Activated CD4-positive, alpha-beta T cell treated with anti-CD3 and anti-CD28 coated beads, Interleukin-2, amount 10 ng/mL, durations not matched to agents 24 days and 14 days (primary cell): ENCODE measurements at regions of chr3 and their contacts with region 1.

Region 1: DNA sequence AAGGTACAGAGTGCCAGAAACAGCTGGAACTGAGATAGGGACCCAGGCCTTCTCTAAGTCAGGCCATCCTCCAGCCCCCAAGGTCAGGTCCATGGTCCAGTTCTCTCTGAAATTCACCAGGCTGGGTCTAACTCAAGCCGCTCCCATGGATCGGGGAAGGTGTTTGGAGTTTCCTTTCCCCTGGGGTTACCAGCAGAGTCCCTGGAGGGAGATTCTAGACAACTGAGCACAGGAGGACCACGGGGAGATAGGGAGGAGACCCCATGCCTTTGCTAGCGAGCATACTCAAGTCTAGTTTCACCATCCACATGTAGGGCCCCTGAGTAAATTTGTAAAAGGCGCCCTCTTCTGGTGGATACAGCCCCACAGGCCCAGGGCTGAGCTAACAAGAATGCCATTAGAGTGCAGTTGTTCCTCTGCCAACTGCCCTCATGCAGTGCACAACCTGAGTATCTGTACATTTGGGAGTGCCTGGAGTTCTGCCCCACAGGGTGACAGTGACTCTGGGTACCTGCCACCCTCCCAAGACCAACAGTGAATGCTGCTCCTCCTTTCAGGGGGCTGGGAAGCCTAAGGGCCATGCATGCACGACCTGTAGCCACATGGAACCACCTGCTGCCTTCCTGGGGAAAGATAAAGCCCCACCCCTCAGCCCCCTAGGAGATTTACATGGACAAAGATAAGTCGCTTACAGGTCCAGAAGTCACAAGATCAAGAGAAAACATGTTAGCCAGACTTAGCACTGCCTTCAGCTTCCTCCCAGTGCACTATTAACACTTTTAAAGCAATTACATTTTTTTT is 89.0 kb downstream of the IQSEC1 start:
- DNase-seq: peak; percentile 87
- H3K4me3 Mint-ChIP-seq: no peak overlapping the region
- H3K27ac Mint-ChIP-seq: no peak overlapping the region
- H3K4me1 Mint-ChIP-seq: peaks cover 19% of the 10 kb centered on the region
- H3K27me3 Mint-ChIP-seq: no peaks in the 10 kb centered on the region

Region 2: DNA sequence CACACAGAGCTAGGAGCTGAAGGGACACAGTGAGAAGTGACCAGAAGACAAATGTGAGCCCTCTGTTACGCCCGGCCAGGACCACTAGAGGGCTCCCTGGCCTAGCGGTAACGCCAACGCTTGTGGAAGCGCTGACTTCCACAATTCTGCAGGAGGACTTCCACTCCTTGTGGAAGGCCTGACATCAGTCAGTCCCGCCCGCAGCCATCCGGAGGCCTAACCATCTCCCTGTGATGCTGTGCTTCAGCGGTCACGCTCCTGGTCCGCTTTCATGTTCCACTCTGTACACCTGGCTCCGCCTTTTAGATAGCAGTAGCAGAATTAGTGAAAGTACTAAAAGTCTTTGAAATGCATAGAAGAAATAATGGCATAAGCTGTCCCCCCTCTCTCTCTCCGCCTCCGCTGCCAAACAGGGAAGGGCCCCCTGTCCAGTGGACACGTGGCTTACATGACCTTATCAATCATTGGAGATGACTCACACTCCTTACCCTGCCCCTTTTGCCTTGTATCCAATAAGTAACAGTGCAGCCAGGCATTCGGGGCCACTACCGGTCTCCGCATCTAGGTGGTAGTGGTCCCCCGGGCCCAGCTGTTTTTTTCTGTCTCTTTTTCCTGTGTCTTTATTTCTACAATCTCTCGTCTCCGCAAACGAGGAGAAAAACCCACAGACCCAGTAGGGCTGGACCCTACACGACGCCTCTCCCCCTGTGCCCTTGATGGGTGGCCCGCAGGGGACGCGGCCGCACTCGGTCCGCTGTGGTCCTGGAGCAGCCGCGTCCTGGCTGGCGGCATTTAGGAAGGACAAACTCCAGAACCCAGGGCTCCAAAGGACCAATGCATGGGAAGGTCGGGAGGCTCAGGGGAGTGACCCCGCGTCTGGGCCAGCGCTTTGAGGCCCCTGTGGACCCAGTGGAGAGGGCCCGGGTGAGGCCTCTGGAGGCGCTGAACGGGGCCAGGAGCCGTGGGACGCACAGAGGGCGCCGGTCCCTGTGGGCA is 115.9 kb before region 1 on chr3:
- intact Hi-C with region 1: loop called (anchors 1 kb)
- DNase-seq: peak; percentile 88
- H3K4me3 Mint-ChIP-seq: peak overlapping the region; percentile 79
- H3K27ac Mint-ChIP-seq: peak overlapping the region; percentile 29
- H3K4me1 Mint-ChIP-seq: peaks cover 12% of the 10 kb centered on the region
- H3K27me3 Mint-ChIP-seq: peaks cover 31% of the 10 kb centered on the region

Region 3: DNA sequence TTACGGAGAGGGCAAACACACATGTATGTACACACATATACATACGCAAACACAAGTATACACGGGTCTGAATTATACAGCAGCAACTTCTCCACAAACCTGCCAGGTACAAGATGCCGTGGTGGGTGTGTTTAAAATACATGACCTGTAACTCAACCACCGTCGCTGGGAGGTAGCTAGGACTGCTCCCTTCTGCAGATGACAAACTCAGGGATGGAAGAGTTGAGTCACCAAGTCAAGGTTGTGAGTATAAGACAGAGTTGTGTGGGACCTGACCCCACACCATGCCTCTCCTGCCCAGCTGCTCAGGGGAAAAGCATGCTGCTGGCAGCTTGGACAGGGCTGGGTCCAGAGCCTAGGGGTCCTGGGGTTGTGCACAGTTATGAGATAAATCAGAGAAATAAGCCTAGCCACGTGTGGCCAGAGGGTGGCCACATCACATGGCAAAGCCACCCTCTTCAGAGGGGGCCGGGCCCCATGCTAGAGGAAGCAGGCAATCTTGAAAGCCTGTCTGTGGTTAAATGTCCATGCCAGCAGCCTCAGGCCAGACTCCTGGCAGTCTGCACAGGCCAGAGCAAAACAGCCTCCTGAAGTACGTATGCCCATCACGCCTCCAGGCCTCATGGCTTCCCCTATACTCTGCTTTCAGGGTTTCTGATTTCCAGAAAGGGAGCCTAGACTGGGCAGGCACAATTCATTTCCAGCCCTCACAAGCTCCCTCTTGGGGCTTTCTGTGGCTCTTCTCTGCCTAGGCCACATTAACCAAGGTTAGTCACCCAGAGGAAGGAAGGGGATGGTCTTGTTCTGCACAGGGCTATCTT is 35.1 kb before region 1 on chr3:
- intact Hi-C with region 1: loop called (anchors 5 kb)
- DNase-seq: peak; percentile 75
- H3K4me3 Mint-ChIP-seq: peak overlapping the region; percentile 40
- H3K27ac Mint-ChIP-seq: peak overlapping the region; percentile 89
- H3K4me1 Mint-ChIP-seq: peaks cover 30% of the 10 kb centered on the region
- H3K27me3 Mint-ChIP-seq: no peaks in the 10 kb centered on the region

Region 4: DNA sequence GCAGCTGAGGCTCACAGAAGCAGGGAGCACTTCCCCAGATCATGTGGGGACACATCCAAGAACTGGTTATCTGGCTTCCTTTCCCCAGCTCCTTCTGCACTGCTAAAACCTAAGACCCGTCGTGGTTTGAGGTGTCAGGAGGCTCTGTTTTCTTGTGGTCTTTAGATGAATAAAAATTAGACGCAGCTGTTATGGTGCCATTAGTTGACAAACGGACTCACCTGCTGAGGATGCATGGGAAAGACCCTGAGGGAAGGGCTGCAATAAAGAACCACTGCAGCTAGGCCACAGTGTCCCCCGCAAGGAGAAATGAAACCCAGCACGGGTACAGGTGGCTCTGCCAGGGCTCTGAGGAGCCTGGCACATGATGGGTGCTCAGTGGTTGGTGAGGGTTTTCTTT is 10.4 kb before region 1 on chr3:
- intact Hi-C with region 1: loop called (anchors 2 kb)
- DNase-seq: no peak
- H3K4me3 Mint-ChIP-seq: no peak overlapping the region
- H3K27ac Mint-ChIP-seq: no peak overlapping the region
- H3K4me1 Mint-ChIP-seq: no peaks in the 10 kb centered on the region
- H3K27me3 Mint-ChIP-seq: no peaks in the 10 kb centered on the region